Left ventricle myocardium superior (tissue), 1 donor: ENCODE measurements at regions of chr2 and their contacts with region 1.

Region 1: GRCh38 chr2:130797493-130798435 is 39.0 kb upstream of the ARHGEF4 start:
- DNase-seq: peak; percentile 96
- ATAC-seq: peak; percentile 97

Region 2: GRCh38 chr2:130873700-130874346 is 76.1 kb after region 1 on chr2:
- intact Hi-C with region 1: loop called (anchors 10 kb)
- DNase-seq: peak; percentile 72
- ATAC-seq: peak; percentile 68

Region 3: GRCh38 chr2:130920415-130921163 is 122.8 kb after region 1 on chr2:
- intact Hi-C with region 1: loop called (anchors 5 kb)
- DNase-seq: peak; percentile 69
- ATAC-seq: peak; percentile 55